ENCODE measurements at regions of chr10 and their contacts with region 1.

Region 1: DNA sequence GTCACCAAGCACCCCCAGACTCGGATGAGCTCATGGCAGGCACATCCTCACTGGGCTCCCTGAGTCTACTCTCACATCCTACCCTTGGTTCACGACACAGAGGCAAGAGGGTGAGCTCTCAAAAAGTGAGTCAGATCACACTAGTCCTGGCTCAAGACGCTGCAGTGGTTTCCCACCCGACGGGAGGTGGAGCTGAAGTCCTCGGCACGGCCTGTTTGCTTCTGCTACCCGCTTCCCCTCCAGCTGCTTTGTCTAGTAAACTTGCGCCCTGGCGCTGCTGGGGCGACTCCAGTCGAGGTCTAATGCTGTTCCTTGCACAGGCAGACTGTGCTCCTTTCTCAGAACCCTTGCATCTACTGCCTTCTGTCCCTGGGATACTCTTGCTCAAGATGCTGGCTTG is 13.5 kb upstream of the SFMBT2 start:
- DNase-seq: peak in 6 of 9 experiments; percentile 26 to 70 (median 58)
- ATAC-seq: peak; percentile 91
- H3K4me3 ChIP-seq: no peak overlapping the region
- H3K4me3 Mint-ChIP-seq: no peak overlapping the region
- H3K27ac ChIP-seq: no peak overlapping the region
- H3K27ac Mint-ChIP-seq: peak overlapping the region; percentile 49
- H3K4me1 ChIP-seq: no peaks in the 10 kb centered on the region
- H3K4me1 Mint-ChIP-seq: peaks cover 24% of the 10 kb centered on the region
- H3K27me3 ChIP-seq: no peaks in the 10 kb centered on the region
- H3K27me3 Mint-ChIP-seq: no peaks in the 10 kb centered on the region
- CTCF ChIP-seq: no peak

Region 2: GRCh38 chr10:7373039-7373438 is 51.3 kb before region 1 on chr10:
- CTCF ChIA-PET with region 1: no interaction called
- POLR2A ChIA-PET with region 1: no interaction called
- intact Hi-C with region 1: no loop called
- DNase-seq: no peak
- ATAC-seq: no peak
- H3K4me3 ChIP-seq: no peak overlapping the region
- H3K4me3 Mint-ChIP-seq: no peak overlapping the region
- H3K27ac ChIP-seq: no peak overlapping the region
- H3K27ac Mint-ChIP-seq: no peak overlapping the region
- H3K4me1 ChIP-seq: no peaks in the 10 kb centered on the region
- H3K4me1 Mint-ChIP-seq: peaks cover 17% of the 10 kb centered on the region
- H3K27me3 ChIP-seq: no peaks in the 10 kb centered on the region
- H3K27me3 Mint-ChIP-seq: no peaks in the 10 kb centered on the region
- CTCF ChIP-seq: no peak

Region 3: DNA sequence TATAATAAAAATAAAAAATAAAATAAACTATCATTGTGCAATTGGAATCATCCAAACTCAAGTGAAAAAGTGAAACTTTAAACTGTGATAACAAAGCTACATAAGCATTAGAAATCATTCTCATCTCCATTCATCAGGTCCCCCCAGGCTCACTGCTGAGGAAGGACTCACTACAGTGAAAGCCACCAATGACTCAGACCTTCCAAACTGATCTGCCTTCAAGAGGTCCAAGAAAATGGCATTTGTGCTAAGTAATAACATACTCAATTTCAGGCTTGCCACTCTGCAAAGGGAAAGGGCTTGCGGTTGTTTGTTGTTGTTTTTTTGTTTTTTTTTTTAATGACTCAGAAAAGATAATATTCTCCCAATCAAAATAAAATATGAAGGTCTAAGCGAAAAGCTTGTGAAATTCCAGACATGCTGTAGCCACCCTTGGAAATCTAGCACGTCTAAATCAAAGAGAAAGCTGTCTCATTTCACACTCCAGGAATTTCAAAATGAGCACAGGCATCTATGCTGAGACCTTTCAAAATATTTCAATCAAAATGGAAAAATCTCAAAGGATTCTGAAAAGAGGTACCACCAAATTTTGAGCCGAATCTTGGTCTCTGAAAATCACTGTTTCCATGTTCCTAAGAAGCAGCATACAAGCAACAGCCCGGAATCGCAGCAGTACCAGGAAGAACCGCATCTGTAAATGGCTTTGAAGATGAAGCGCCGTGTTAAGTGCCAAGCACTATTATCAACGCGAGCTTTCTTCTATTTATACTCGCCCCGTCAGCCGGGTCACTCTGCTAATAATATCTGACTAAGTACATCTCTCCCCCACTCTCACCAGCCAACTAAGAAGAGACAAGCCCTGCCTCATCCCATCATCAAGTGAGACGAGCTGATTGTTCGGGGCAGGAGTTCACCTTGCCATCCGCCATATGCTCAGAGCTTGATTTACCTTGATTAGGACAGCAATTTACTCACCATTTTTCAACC is 27.0 kb before region 1 on chr10:
- CTCF ChIA-PET with region 1: no interaction called
- POLR2A ChIA-PET with region 1: no interaction called
- intact Hi-C with region 1: no loop called
- DNase-seq: no peak
- ATAC-seq: no peak
- H3K4me3 ChIP-seq: no peak overlapping the region
- H3K4me3 Mint-ChIP-seq: no peak overlapping the region
- H3K27ac ChIP-seq: no peak overlapping the region
- H3K27ac Mint-ChIP-seq: no peak overlapping the region
- H3K4me1 ChIP-seq: peaks cover 7% of the 10 kb centered on the region
- H3K4me1 Mint-ChIP-seq: peaks cover 67% of the 10 kb centered on the region
- H3K27me3 ChIP-seq: no peaks in the 10 kb centered on the region
- H3K27me3 Mint-ChIP-seq: no peaks in the 10 kb centered on the region
- CTCF ChIP-seq: no peak

Region 4: DNA sequence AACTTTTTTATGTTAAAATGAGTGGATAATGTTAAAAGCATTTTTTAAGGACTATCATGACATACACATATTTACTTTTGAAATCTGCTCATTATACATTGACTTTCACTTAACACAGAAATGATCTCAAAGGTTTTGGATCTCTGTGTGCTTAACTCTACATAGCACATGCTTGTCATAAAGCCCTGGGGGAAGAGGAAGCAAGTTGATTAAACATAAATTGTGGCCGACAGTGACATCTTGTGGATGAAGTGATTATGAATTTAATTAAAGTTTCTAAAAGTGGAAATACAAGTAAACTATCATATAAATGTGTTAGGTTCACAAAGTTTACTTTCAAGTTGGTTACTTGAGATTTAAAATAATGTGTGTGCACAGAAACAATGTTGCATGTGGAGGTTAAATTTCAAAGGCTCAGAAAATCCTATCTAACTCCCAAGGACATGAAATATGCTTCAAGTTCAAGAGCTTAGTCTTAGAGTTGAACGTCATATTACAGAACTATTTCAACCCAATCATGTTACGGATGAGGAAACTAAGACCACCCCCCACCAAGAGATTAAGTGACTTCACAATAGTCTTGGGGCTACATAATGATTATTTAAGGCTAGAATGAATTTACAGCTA is 1877.9 kb after region 1 on chr10:
- CTCF ChIA-PET with region 1: no interaction called
- POLR2A ChIA-PET with region 1: no interaction called
- intact Hi-C with region 1: loop called in 1 of 2 experiments (anchors 10 kb)
- DNase-seq: peak in 3 of 9 experiments; percentile 19 to 63 (median 51)
- ATAC-seq: peak; percentile 44
- H3K4me3 ChIP-seq: no peak overlapping the region
- H3K4me3 Mint-ChIP-seq: no peak overlapping the region
- H3K27ac ChIP-seq: no peak overlapping the region
- H3K27ac Mint-ChIP-seq: no peak overlapping the region
- H3K4me1 ChIP-seq: no peaks in the 10 kb centered on the region
- H3K4me1 Mint-ChIP-seq: no peaks in the 10 kb centered on the region
- H3K27me3 ChIP-seq: no peaks in the 10 kb centered on the region
- H3K27me3 Mint-ChIP-seq: peaks cover 11% of the 10 kb centered on the region
- CTCF ChIP-seq: peak; percentile 59

Measured in CD8-positive, alpha-beta T cell (primary cell).